Natural killer cell (primary cell): ENCODE measurements at regions of chr17 and their contacts with region 1.

Region 1: GRCh38 chr17:82315703-82316358 is 1.6 kb downstream of the CD7 start:
- DNase-seq: peak in 1 of 2 donors; percentile 78
- ATAC-seq: peak; percentile 30 to 44 (median 40)
- H3K4me3 ChIP-seq: peak overlapping the region; percentile 77
- H3K4me3 Mint-ChIP-seq: peak overlapping the region; percentile 96
- H3K27ac ChIP-seq: peak overlapping the region; percentile 78
- H3K27ac Mint-ChIP-seq: no peak overlapping the region
- H3K4me1 ChIP-seq: peaks cover 54% of the 10 kb centered on the region
- H3K4me1 Mint-ChIP-seq: peaks cover 14 to 35% of the 10 kb centered on the region in 2 donors
- H3K27me3 ChIP-seq: no peaks in the 10 kb centered on the region
- H3K27me3 Mint-ChIP-seq: no peaks in the 10 kb centered on the region
- CTCF ChIP-seq: no peak

Region 2: DNA sequence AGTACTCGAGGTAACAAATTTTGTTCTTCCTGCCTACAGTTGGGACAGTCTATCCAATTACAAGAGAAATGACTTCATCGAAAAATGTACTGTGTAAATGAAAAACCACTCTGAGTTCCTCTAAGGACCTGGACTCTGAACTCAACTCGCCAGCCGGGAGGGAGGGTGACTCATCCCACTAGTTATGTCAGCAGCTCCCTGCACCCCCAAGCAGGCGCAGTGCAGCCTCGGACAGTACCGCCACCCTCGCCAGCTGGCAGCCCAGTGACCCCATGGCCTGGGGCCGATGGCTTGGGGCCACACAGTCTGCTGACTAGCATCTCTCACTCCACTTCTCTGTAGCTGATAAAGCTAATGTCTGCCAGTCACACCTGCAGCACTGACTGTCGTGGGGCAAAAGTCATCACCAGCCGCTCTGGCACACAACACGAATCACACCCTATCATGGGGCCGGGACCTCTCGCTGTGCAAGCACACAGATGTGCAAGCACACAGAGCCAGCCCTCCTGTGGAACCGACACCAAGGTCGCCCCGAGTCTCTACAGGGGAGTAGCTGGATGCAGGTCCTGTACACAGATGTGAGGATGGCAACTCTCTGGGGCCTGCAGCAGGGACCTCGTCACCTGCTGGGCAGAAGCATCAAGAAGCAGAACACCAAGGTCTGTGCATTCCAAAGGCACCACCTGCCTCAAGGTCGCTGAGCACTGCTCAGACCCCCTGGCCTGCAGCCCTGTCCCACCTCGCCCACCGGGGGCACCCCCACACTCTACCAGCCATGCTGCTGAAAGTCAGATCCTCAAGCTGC is 48.1 kb before region 1 on chr17:
- intact Hi-C with region 1: loop called (anchors 5 kb)
- DNase-seq: peak; percentile 45 to 50
- ATAC-seq: peak; percentile 54 to 70 (median 65)
- H3K4me3 ChIP-seq: no peak overlapping the region
- H3K4me3 Mint-ChIP-seq: peak overlapping the region; percentile 60
- H3K27ac ChIP-seq: peak overlapping the region; percentile 51
- H3K27ac Mint-ChIP-seq: peak overlapping the region; percentile 87 to 91
- H3K4me1 ChIP-seq: peaks cover 68% of the 10 kb centered on the region
- H3K4me1 Mint-ChIP-seq: peaks cover 68 to 72% of the 10 kb centered on the region in 2 donors
- H3K27me3 ChIP-seq: no peaks in the 10 kb centered on the region
- H3K27me3 Mint-ChIP-seq: no peaks in the 10 kb centered on the region
- CTCF ChIP-seq: no peak

Region 3: DNA sequence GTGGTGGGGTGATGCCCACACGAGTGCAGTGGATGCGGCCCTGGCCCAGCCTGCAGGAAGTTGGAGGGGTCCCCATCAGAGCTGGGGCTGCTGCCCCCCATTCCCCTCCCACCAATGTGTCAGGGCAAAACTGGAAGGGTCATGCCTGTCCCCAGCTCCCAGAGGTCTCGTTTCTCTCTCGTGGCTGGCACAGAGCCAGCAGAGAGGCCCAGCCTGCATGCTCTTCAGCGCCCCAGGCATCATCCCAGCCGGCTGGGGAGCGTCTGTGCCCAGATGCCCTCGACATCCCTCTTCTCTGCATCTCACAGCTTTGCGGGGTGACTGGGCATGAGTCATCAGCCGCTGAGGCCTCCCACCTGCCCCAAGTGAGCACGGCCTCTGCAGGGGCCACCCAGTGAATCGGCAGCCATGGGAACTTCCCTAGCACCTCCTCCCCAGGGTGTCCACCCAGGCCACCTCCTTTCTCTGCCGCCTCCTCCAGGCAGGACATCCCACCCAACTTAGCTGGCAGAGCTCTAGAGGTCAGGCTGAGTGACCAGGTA is 32.6 kb before region 1 on chr17:
- intact Hi-C with region 1: no loop called
- DNase-seq: peak in 1 of 2 donors; percentile 31
- ATAC-seq: peak; percentile 60 to 83 (median 75)
- H3K4me3 ChIP-seq: no peak overlapping the region
- H3K4me3 Mint-ChIP-seq: no peak overlapping the region
- H3K27ac ChIP-seq: no peak overlapping the region
- H3K27ac Mint-ChIP-seq: peak overlapping the region in 1 of 2 donors; percentile 51
- H3K4me1 ChIP-seq: peaks cover 45% of the 10 kb centered on the region
- H3K4me1 Mint-ChIP-seq: peaks cover 13 to 19% of the 10 kb centered on the region in 2 donors
- H3K27me3 ChIP-seq: no peaks in the 10 kb centered on the region
- H3K27me3 Mint-ChIP-seq: no peaks in the 10 kb centered on the region
- CTCF ChIP-seq: no peak

Region 4: DNA sequence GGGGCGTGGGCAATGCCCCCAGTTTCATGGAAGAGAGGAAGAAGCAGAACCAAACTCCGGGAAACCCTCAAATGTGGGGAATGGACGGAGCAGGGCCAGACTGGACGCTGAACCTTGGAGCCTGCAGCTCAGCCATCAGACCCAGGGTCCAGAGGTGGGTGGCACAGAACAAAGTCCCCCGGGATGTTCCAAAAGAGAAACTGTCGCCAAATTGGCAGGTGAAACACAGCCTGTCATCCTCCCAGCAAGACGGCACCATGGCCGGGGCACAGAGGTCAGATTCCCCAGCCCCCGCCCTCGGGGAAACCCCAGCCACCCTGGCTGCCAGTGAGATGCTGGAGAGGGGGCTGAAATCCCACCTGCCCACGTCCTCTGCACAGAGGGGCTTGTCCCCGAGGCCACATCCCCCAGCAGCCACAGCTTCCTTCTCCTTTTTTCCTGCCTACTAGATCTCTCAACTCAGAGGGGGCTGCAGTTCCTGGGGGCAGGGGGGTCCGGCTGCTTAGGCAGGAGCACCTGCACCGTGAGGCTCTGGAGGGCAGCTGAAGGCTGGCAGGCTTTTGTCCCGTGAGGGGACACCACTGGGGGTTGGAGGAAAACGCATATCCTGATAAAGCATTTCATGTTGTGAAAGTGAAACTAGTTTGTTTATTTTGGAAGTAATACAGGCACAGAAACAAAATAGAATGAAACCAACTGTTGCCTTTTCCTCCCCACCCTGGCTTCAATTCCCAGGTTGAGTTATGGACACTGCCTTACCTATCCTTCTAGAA is 19.0 kb after region 1 on chr17:
- intact Hi-C with region 1: loop called (anchors 1 kb)
- DNase-seq: peak in 1 of 2 donors; percentile 53
- ATAC-seq: peak; percentile 41 to 48 (median 43)
- H3K4me3 ChIP-seq: peak overlapping the region; percentile 40
- H3K4me3 Mint-ChIP-seq: peak overlapping the region; percentile 99
- H3K27ac ChIP-seq: peak overlapping the region; percentile 54
- H3K27ac Mint-ChIP-seq: peak overlapping the region; percentile 84 to 93
- H3K4me1 ChIP-seq: peaks cover 36% of the 10 kb centered on the region
- H3K4me1 Mint-ChIP-seq: peaks cover 18 to 28% of the 10 kb centered on the region in 2 donors
- H3K27me3 ChIP-seq: peaks cover 3% of the 10 kb centered on the region
- H3K27me3 Mint-ChIP-seq: peaks cover 0 to 4% of the 10 kb centered on the region in 2 donors
- CTCF ChIP-seq: no peak